ENCODE measurements at regions of chr12 and their contacts with region 1.

Region 1: GRCh38 chr12:23204933-23205778 is 580.2 kb downstream of the ETNK1 start:
- DNase-seq: peak; percentile 56 to 68 (median 65)
- ATAC-seq: peak; percentile 84
- H3K4me3 ChIP-seq: no peak overlapping the region
- H3K27ac ChIP-seq: no peak overlapping the region
- H3K4me1 ChIP-seq: no peaks in the 10 kb centered on the region
- H3K27me3 ChIP-seq: no peaks in the 10 kb centered on the region
- CTCF ChIP-seq: peak; percentile 66 to 80 (median 75)
- EP300 ChIP-seq: no peak
- POLR2A ChIP-seq: no peak
- RAD21 ChIP-seq: peak; percentile 84 to 90

Region 2: GRCh38 chr12:24025153-24025798 is 820.1 kb after region 1 on chr12:
- CTCF ChIA-PET with region 1: no interaction called
- POLR2A ChIA-PET with region 1: no interaction called
- in situ Hi-C with region 1: no loop called
- intact Hi-C with region 1: loop called (anchors 10 kb)
- DNase-seq: peak; percentile 10 to 37 (median 21)
- ATAC-seq: peak; percentile 81
- H3K4me3 ChIP-seq: no peak overlapping the region
- H3K27ac ChIP-seq: no peak overlapping the region
- H3K4me1 ChIP-seq: no peaks in the 10 kb centered on the region
- H3K27me3 ChIP-seq: no peaks in the 10 kb centered on the region
- CTCF ChIP-seq: peak; percentile 29 to 63 (median 43); a peak in 5 of 6 replicates
- EP300 ChIP-seq: no peak
- POLR2A ChIP-seq: no peak
- RAD21 ChIP-seq: peak; percentile 76 to 80